ENCODE measurements at regions of chr12 and their contacts with region 1.

Region 1: GRCh38 chr12:117002051-117002817 is 91.5 kb downstream of the FBXW8 start:
- DNase-seq: no peak
- ATAC-seq: peak; percentile 13 to 62 (median 50)
- H3K4me3 ChIP-seq: no peak overlapping the region
- H3K27ac ChIP-seq: peak overlapping the region in 7 of 10 donors; percentile 4 to 58 (median 37)
- H3K4me1 ChIP-seq: peaks cover 0 to 29% (median 15%) of the 10 kb centered on the region in 9 donors
- H3K27me3 ChIP-seq: no peaks in the 10 kb centered on the region
- CTCF ChIP-seq: no peak

Region 2: GRCh38 chr12:116717466-116718437 is 284.5 kb before region 1 on chr12:
- intact Hi-C with region 1: loop called in 1 of 10 experiments (anchors 10 kb)
- DNase-seq: peak; percentile 55 to 61
- ATAC-seq: peak; percentile 69 to 90 (median 76)
- H3K4me3 ChIP-seq: peak overlapping the region in 6 of 10 donors; percentile 1 to 31 (median 17)
- H3K27ac ChIP-seq: peak overlapping the region in 3 of 10 donors; percentile 17 to 61 (median 32)
- H3K4me1 ChIP-seq: peaks cover 0 to 40% (median 15%) of the 10 kb centered on the region in 9 donors
- H3K27me3 ChIP-seq: no peaks in the 10 kb centered on the region
- CTCF ChIP-seq: no peak

Region 3: GRCh38 chr12:116880817-116881324 is 121.4 kb before region 1 on chr12:
- intact Hi-C with region 1: no loop called
- DNase-seq: peak; percentile 10 to 28
- ATAC-seq: peak; percentile 41 to 88 (median 74)
- H3K4me3 ChIP-seq: peak overlapping the region in 9 of 10 donors; percentile 27 to 54 (median 47)
- H3K27ac ChIP-seq: no peak overlapping the region
- H3K4me1 ChIP-seq: peaks cover 8 to 43% (median 32%) of the 10 kb centered on the region in 9 donors
- H3K27me3 ChIP-seq: peaks cover 7 to 91% (median 76%) of the 10 kb centered on the region in 7 donors
- CTCF ChIP-seq: peak in 2 of 9 donors; percentile 10 to 28